ENCODE measurements at regions of chr7 and their contacts with region 1.

Region 1: GRCh38 chr7:78026492-78026891 is 227.9 kb downstream of the PHTF2 start:
- DNase-seq: no peak
- ATAC-seq: no peak
- H3K4me3 ChIP-seq: no peak overlapping the region
- H3K4me3 Mint-ChIP-seq: no peak overlapping the region
- H3K27ac ChIP-seq: no peak overlapping the region
- H3K27ac Mint-ChIP-seq: no peak overlapping the region
- H3K4me1 ChIP-seq: no peaks in the 10 kb centered on the region
- H3K4me1 Mint-ChIP-seq: no peaks in the 10 kb centered on the region
- H3K27me3 ChIP-seq: no peaks in the 10 kb centered on the region
- H3K27me3 Mint-ChIP-seq: peaks cover 3 to 9% of the 10 kb centered on the region in 2 donors

Region 2: DNA sequence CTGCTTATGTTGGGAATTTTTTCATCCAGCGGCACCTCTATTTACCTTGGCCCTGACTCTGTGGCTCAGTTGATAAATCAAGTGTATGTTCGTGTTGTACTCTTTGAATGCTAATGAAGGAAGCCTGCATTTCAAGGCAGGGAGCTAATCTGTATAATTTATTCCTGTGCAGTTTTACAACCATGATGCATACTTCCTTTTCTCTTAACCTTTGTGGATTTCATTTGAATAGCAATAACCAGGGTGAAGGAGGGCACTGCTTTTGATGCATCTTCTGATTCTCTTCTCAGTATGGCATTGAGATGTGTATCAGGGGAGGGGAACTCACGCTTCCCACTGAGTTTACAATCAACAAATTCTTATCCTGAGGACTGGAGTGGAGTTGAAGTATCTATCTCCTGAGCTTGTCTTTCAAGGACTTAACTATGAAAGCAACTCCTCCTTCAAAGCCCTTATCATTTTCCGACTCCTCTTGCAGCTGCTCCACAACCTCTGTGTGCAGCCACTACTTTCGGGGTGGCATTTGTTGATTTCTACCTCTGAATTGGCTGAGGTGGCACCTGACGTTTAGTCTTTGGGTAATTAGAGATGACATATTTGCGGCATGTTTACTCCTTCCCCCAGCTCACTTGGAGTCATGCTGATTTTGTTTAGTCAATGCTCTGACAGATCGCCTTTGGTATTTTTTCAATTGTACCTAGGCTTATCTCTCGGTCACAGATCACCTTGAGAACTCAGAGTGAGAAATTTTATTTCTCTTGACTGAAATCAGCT is 47.3 kb after region 1 on chr7:
- CTCF ChIA-PET with region 1: no interaction called
- POLR2A ChIA-PET with region 1: interaction called in 1 of 2 experiments, 16 read pairs
- DNase-seq: no peak
- ATAC-seq: no peak
- H3K4me3 ChIP-seq: no peak overlapping the region
- H3K4me3 Mint-ChIP-seq: no peak overlapping the region
- H3K27ac ChIP-seq: no peak overlapping the region
- H3K27ac Mint-ChIP-seq: no peak overlapping the region
- H3K4me1 ChIP-seq: no peaks in the 10 kb centered on the region
- H3K4me1 Mint-ChIP-seq: no peaks in the 10 kb centered on the region
- H3K27me3 ChIP-seq: peaks cover 0 to 6% of the 10 kb centered on the region in 2 experiments
- H3K27me3 Mint-ChIP-seq: peaks cover 8 to 13% of the 10 kb centered on the region in 2 donors